AG04450 (cell line): ENCODE measurements at regions of chr7 and their contacts with region 1.

Region 1: DNA sequence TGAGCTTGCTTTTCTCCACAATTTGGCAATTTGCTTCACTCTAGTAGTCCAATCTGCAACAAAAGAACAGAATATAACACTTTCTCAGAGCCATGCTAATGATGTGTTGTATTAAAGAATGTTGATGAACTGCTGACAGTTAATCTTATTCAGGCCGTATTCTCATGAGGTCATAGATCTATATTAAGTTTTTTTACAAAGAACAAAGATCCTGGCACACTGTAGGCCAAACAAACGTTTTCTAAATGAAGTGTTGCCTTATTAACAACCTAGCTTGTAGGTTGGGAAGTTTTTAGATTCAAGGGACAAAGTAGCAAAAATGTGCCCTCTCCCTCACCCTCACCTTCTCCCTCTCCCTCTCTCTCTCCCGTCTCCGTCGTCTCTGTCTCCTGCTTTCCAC is 6.8 kb downstream of the HILPDA start:
- DNase-seq: no peak
- H3K4me3 ChIP-seq: no peak overlapping the region
- H3K27ac ChIP-seq: no peak overlapping the region
- H3K27me3 ChIP-seq: no peaks in the 10 kb centered on the region
- CTCF ChIP-seq: no peak

Region 2: DNA sequence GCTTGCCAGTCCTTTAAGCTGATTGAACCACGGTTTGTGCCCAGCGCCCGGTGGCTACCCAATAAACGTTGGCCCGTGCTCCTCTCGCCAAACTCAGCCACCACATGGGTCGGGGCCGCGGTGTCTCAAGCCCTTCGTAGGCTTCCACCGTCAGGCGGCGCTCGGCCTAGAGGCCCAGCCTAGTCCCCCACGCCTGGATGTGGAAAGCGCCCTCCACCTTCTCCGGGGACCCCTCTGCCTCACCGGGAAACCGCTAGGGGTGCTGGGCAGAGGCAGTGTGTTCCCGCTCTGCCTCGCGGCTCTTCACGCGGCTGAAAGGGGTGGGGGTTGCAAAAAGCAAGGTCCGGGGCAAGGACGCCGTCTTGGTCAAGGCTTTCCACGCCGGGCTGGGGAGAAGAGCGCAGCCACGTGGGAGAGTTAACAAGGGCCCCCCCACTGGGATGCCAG is 191.6 kb before region 1 on chr7:
- CTCF ChIA-PET with region 1: no interaction called
- POLR2A ChIA-PET with region 1: no interaction called
- DNase-seq: no peak
- H3K4me3 ChIP-seq: no peak overlapping the region
- H3K27ac ChIP-seq: no peak overlapping the region
- H3K27me3 ChIP-seq: peaks cover 61% of the 10 kb centered on the region
- CTCF ChIP-seq: peak; percentile 31

Region 3: GRCh38 chr7:128437426-128438332 is 24.8 kb before region 1 on chr7:
- CTCF ChIA-PET with region 1: interaction called, 22 read pairs
- POLR2A ChIA-PET with region 1: no interaction called
- DNase-seq: no peak
- H3K4me3 ChIP-seq: no peak overlapping the region
- H3K27ac ChIP-seq: no peak overlapping the region
- H3K27me3 ChIP-seq: peaks cover 12% of the 10 kb centered on the region
- CTCF ChIP-seq: no peak